IMR-90 (cell line): ENCODE measurements at regions of chr22 and their contacts with region 1.

Region 1: GRCh38 chr22:40651563-40652501 is 15.3 kb upstream of the MRTFA start:
- DNase-seq: peak; percentile 100
- ATAC-seq: peak; percentile 94
- H3K4me3 ChIP-seq: peak overlapping the region; percentile 59
- H3K27ac ChIP-seq: peak overlapping the region; percentile 93
- H3K4me1 ChIP-seq: peaks cover 13% of the 10 kb centered on the region
- H3K27me3 ChIP-seq: no peaks in the 10 kb centered on the region
- CTCF ChIP-seq: no peak
- POLR2A ChIP-seq: peak; percentile 90
- RAD21 ChIP-seq: peak; percentile 13; the same call in 1 of the 2 replicates

Region 2: GRCh38 chr22:40368016-40368415 is 283.8 kb before region 1 on chr22:
- CTCF ChIA-PET with region 1: no interaction called
- POLR2A ChIA-PET with region 1: interaction called, 13 read pairs
- dilution Hi-C with region 1: no loop called
- in situ Hi-C with region 1: no loop called
- intact Hi-C with region 1: loop called (anchors 5 kb)
- DNase-seq: no peak
- ATAC-seq: no peak
- H3K4me3 ChIP-seq: no peak overlapping the region
- H3K27ac ChIP-seq: no peak overlapping the region
- H3K4me1 ChIP-seq: no peaks in the 10 kb centered on the region
- H3K27me3 ChIP-seq: no peaks in the 10 kb centered on the region
- CTCF ChIP-seq: no peak
- POLR2A ChIP-seq: no peak
- RAD21 ChIP-seq: no peak

Region 3: GRCh38 chr22:40479126-40479800 is 172.6 kb before region 1 on chr22:
- CTCF ChIA-PET with region 1: no interaction called
- POLR2A ChIA-PET with region 1: no interaction called
- dilution Hi-C with region 1: no loop called
- in situ Hi-C with region 1: no loop called
- intact Hi-C with region 1: no loop called
- DNase-seq: no peak
- ATAC-seq: no peak
- H3K4me3 ChIP-seq: no peak overlapping the region
- H3K27ac ChIP-seq: no peak overlapping the region
- H3K4me1 ChIP-seq: peaks cover 12% of the 10 kb centered on the region
- H3K27me3 ChIP-seq: no peaks in the 10 kb centered on the region
- CTCF ChIP-seq: no peak
- POLR2A ChIP-seq: no peak
- RAD21 ChIP-seq: no peak

Region 4: GRCh38 chr22:40610329-40610850 is 41.4 kb before region 1 on chr22:
- CTCF ChIA-PET with region 1: no interaction called
- POLR2A ChIA-PET with region 1: no interaction called
- dilution Hi-C with region 1: no loop called
- in situ Hi-C with region 1: no loop called
- intact Hi-C with region 1: no loop called
- DNase-seq: no peak
- ATAC-seq: no peak
- H3K4me3 ChIP-seq: no peak overlapping the region
- H3K27ac ChIP-seq: no peak overlapping the region
- H3K4me1 ChIP-seq: peaks cover 13% of the 10 kb centered on the region
- H3K27me3 ChIP-seq: no peaks in the 10 kb centered on the region
- CTCF ChIP-seq: no peak
- POLR2A ChIP-seq: no peak
- RAD21 ChIP-seq: no peak

Region 5: DNA sequence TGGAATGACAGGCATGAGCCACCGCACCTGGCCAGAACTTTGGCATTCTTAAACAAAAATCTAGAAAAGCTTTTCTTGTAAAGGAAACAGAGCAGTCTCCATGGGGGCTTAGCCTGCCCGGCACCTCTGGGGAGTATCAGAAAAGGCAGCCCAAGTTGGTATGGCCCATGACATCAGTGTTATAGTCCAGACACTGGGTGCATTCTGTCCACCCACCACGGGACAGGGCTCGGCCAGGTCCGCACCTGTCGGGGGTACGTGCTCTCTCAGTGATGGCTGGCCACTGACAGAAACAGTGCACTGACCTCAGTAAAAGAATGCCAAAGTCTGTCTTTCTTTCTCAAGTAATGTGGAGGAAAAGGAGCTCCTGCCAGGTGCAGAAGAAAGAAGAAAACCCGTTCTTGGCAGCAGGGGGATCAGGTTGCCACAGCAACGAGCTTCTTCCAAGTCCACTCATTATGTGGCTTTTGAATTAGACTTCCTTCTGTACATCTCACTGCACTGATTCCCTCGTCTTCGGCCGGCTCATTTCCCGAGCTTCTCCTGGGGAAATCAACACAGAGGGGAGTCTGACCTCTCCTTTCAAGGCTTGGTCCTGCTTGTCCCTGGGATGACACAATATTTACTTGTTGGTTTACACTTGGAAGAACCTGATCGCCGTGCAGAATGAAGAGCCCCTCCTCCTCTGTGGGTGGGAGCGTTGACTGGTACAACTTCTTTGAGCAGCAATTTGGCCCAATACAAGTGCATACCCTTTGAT is 62.5 kb after region 1 on chr22:
- CTCF ChIA-PET with region 1: no interaction called
- POLR2A ChIA-PET with region 1: no interaction called
- dilution Hi-C with region 1: no loop called
- in situ Hi-C with region 1: no loop called
- intact Hi-C with region 1: loop called (anchors 5 kb)
- DNase-seq: peak; percentile 68
- ATAC-seq: no peak
- H3K4me3 ChIP-seq: no peak overlapping the region
- H3K27ac ChIP-seq: no peak overlapping the region
- H3K4me1 ChIP-seq: peaks cover 13% of the 10 kb centered on the region; the same call in 1 of the 2 replicates
- H3K27me3 ChIP-seq: no peaks in the 10 kb centered on the region
- CTCF ChIP-seq: no peak
- POLR2A ChIP-seq: no peak
- RAD21 ChIP-seq: no peak

Region 6: DNA sequence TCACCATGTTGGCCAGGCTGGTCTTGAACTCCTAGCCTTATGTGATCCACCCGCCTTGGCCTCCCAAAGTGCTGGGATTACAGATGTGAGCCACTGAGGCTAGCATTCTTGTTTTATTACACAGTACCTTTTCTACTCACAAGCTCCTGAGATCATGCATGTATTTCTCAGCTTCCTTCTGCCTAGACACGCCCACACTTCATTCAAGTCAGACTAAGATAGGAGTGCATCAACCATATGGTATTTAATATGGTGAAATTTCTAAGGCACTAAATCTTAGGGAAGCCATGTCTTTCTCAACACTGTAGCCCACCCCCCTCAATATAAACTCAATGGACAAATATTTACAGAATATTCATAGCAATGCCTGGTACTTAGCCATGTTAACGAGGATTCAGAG is 105.2 kb after region 1 on chr22:
- CTCF ChIA-PET with region 1: no interaction called
- POLR2A ChIA-PET with region 1: no interaction called
- dilution Hi-C with region 1: no loop called
- in situ Hi-C with region 1: no loop called
- intact Hi-C with region 1: no loop called
- DNase-seq: peak; percentile 69
- ATAC-seq: peak; percentile 68
- H3K4me3 ChIP-seq: no peak overlapping the region
- H3K27ac ChIP-seq: no peak overlapping the region
- H3K4me1 ChIP-seq: peaks cover 3% of the 10 kb centered on the region; the same call in 1 of the 2 replicates
- H3K27me3 ChIP-seq: no peaks in the 10 kb centered on the region; the same call in 1 of the 2 replicates
- CTCF ChIP-seq: no peak
- POLR2A ChIP-seq: no peak
- RAD21 ChIP-seq: no peak